Activated CD8-positive, alpha-beta memory T cell treated with anti-CD3 and anti-CD28 coated beads, Interleukin-2, amount 10 ng/mL, durations not matched to agents 7 days and 5 days (primary cell): ENCODE measurements at regions of chr1 and their contacts with region 1.

Region 1: DNA sequence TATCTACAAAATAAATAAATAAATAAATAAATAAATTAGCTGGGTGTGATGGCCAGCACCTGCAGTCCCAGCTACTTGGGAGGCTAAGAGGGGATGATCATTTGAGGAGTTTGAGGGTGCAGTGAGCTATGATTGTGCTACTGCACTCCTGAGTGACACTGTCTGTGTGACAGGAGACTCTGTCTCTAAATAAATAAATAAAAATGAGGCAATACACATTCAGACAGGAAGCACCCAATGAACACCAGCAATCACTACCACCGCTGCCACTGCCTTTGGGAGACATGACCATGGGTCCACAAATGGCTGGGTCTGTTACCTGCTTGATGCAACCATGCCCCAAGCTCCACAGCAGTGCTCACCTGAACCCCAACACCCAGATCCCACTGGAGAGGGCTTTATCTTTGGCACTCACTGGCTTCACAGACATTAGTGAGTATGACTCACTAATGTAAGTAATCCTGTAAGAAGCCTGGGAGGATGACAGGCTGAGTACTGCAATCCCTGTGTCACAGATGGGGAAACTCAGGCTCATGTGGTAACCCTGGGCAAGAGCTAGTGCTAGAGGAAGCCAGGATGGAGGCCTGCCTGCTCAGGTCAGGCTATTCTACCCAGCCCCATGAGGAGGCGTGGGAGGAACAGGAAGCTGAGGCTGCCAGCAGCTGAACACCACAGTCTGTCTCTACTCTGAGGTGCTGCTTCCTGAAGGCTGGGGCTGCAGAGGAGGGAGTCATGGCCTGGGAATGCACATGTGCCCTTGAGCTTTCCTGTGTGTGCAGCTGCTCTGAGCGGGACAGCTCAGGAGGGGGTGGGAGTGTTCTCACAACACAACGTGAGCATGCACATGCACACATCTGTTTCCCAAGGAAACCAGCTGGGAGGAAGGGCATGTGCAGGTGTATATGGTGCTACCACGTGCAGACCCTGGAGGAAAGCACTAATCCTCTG is 43.0 kb downstream of the SLC9A1 start:
- DNase-seq: peak; percentile 87
- ATAC-seq: peak; percentile 99
- H3K4me3 Mint-ChIP-seq: no peak overlapping the region
- H3K27ac Mint-ChIP-seq: peak overlapping the region; percentile 83
- H3K4me1 Mint-ChIP-seq: peaks cover 47% of the 10 kb centered on the region
- H3K27me3 Mint-ChIP-seq: no peaks in the 10 kb centered on the region

Region 2: GRCh38 chr1:27097484-27097917 is 14.4 kb before region 1 on chr1:
- CTCF ChIA-PET with region 1: interaction called, 24 read pairs
- DNase-seq: peak; percentile 85
- ATAC-seq: peak; percentile 87
- H3K4me3 Mint-ChIP-seq: no peak overlapping the region
- H3K27ac Mint-ChIP-seq: no peak overlapping the region
- H3K4me1 Mint-ChIP-seq: peaks cover 23% of the 10 kb centered on the region
- H3K27me3 Mint-ChIP-seq: no peaks in the 10 kb centered on the region

Region 3: DNA sequence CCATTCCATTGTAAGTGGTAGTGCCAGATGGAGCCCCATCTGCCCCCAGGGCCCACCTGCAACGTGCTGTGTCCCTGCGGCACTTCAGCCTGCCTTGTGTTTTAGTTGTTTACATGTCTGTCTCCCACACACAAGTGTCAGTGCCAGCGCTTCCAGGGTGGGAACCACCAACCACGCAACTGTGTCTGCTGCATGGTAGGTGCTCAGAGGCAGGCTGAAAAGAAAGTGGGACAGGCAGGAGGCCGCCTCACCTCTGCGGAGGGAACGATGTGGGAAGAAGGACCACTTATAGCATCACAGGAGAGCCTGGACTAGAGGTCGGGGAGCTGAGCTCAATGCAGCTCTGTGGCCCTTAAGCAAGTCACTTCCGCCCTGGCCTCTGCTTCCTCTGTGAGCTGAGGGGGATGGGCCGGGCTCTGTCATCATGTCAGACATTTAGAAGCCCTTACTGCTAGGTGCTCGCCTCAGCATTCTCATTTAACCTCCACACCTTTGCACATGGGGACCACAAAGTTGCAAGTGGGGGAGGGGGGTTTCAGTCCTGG is 25.2 kb after region 1 on chr1:
- CTCF ChIA-PET with region 1: interaction called, 18 read pairs
- DNase-seq: peak; percentile 93
- ATAC-seq: peak; percentile 94
- H3K4me3 Mint-ChIP-seq: peak overlapping the region; percentile 73
- H3K27ac Mint-ChIP-seq: peak overlapping the region; percentile 99
- H3K4me1 Mint-ChIP-seq: peaks cover 36% of the 10 kb centered on the region
- H3K27me3 Mint-ChIP-seq: no peaks in the 10 kb centered on the region

Region 4: GRCh38 chr1:27154991-27155781 is 43.3 kb after region 1 on chr1 and contains the start of gene SLC9A1:
- CTCF ChIA-PET with region 1: interaction called, 60 read pairs
- DNase-seq: peak; percentile 94
- ATAC-seq: peak; percentile 89
- H3K4me3 Mint-ChIP-seq: peak within 1 kb of the TSS; percentile 91
- H3K27ac Mint-ChIP-seq: peak within 1 kb of the TSS; percentile 91
- H3K4me1 Mint-ChIP-seq: peaks cover 38% of the 10 kb centered on the region
- H3K27me3 Mint-ChIP-seq: no peaks in the 10 kb centered on the region
- total RNA-seq, gene SLC9A1: 25.8 to 26.3 TPM

Region 5: GRCh38 chr1:27284425-27285273 is 172.7 kb after region 1 on chr1:
- CTCF ChIA-PET with region 1: interaction called, 17 read pairs
- DNase-seq: peak; percentile 92
- ATAC-seq: peak; percentile 97
- H3K4me3 Mint-ChIP-seq: no peak overlapping the region
- H3K27ac Mint-ChIP-seq: no peak overlapping the region
- H3K4me1 Mint-ChIP-seq: peaks cover 4% of the 10 kb centered on the region
- H3K27me3 Mint-ChIP-seq: no peaks in the 10 kb centered on the region